HepG2 (cell line): ENCODE measurements at regions of chr1 and their contacts with region 1.

Region 1: DNA sequence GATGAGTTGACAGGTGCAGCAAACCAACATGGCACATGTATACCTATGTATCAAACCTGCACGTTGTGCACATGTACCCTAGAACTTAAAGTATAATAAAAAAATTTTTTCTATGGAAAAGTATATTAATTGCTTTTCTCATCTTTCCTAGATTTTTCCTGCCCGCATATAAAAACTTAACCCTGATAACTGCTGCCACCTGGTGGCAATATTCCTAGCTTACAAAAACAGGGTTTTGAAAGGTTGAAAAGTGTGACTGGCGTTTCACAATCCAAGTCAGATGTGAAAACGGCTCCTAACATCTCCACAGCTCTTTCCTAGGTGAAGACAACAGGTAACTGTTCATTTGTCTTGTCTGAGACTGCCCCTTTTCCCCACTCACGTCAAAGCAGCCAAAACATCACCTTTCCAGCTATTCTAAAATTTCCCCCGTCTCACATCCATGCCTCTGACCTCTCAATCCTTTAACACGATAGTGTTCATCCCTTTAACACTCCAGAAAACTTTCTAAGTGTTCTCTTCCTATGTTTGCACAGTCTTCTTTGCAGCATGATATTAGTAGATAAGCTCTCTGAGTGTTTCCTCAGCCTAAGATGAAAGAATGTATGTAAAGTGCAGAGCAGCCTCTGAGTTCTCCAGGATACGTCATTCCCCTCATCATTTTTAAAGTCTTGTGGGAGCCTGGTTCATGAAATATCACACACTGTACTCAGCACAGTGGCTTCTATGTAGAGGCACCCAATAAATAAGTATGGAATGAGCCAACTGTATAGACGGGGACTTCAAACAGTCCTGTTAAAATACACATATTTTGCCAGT is 27.5 kb downstream of the OVGP1 start:
- DNase-seq: peak; percentile 40
- ATAC-seq: no peak
- H3K4me3 ChIP-seq: no peak overlapping the region
- H3K27ac ChIP-seq: no peak overlapping the region
- H3K4me1 ChIP-seq: no peaks in the 10 kb centered on the region
- H3K27me3 ChIP-seq: peaks cover 0 to 13% of the 10 kb centered on the region in 2 experiments; a peak in 1 of 5 replicates
- CTCF ChIP-seq: peak; percentile 71
- EP300 ChIP-seq: no peak
- POLR2A ChIP-seq: no peak
- RAD21 ChIP-seq: peak; percentile 50; the same call in 1 of the 2 replicates

Region 2: GRCh38 chr1:111222308-111223125 is 177.5 kb before region 1 on chr1:
- CTCF ChIA-PET with region 1: interaction called, 17 read pairs
- POLR2A ChIA-PET with region 1: no interaction called
- in situ Hi-C with region 1: loop called (anchors 5 kb)
- intact Hi-C with region 1: loop called (anchors 2 kb)
- DNase-seq: peak; percentile 62
- ATAC-seq: peak; percentile 97
- H3K4me3 ChIP-seq: peak overlapping the region in 2 of 3 experiments; percentile 8 to 39; a peak in 3 of 6 replicates
- H3K27ac ChIP-seq: no peak overlapping the region
- H3K4me1 ChIP-seq: peaks cover 52% of the 10 kb centered on the region
- H3K27me3 ChIP-seq: no peaks in the 10 kb centered on the region; a peak in 1 of 5 replicates
- CTCF ChIP-seq: peak; percentile 97
- EP300 ChIP-seq: no peak
- POLR2A ChIP-seq: no peak
- RAD21 ChIP-seq: peak; percentile 97

Region 3: DNA sequence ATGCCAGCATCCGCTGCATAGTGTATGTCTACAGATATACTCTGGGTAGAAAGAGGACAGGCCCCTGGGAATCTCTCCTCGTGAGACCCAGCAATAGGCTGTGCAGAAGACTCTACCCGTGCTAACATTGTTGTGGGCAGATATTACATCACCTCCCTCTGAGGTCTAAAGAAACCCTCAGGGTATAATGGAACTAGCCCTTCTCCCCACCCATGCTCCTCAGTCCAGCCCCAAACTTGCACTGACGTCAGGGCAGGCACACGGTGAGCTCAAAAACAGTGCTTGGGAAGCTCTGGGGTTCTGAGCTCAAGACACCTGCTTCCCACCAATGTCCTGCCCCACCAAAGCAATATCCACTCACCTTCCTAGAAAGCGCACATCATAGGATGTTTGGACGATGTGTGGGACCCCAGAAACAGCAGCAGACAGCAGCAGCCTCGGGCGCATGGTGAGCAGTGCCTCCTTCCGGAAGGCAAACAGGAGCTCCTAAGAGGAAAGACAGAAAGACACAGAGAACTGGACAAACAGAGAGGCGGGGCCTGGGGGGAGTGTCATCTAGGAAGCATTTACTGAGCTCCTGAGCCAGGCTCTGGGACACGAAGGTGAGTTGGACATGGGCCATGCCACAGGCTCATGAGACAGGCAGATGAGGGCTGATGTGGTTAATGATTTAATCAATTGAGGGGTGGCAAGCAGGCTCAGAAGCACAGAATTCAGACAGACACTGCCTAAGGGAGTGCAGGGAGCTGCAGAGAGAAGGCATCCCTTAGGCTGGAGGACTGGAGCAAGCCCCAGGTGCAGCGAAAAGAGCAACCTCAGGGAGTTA is 22.8 kb after region 1 on chr1:
- CTCF ChIA-PET with region 1: no interaction called
- POLR2A ChIA-PET with region 1: interaction called, 10 read pairs
- in situ Hi-C with region 1: no loop called
- intact Hi-C with region 1: no loop called
- DNase-seq: peak; percentile 88
- ATAC-seq: peak; percentile 92
- H3K4me3 ChIP-seq: peak overlapping the region in 2 of 3 experiments; percentile 38 to 47; a peak in 2 of 6 replicates
- H3K27ac ChIP-seq: no peak overlapping the region
- H3K4me1 ChIP-seq: peaks cover 70% of the 10 kb centered on the region
- H3K27me3 ChIP-seq: no peaks in the 10 kb centered on the region
- CTCF ChIP-seq: peak; percentile 76
- EP300 ChIP-seq: no peak
- POLR2A ChIP-seq: no peak
- RAD21 ChIP-seq: no peak

Region 4: GRCh38 chr1:111592389-111593361 is 192.7 kb after region 1 on chr1:
- CTCF ChIA-PET with region 1: no interaction called
- POLR2A ChIA-PET with region 1: no interaction called
- in situ Hi-C with region 1: no loop called
- intact Hi-C with region 1: no loop called
- DNase-seq: peak; percentile 18
- ATAC-seq: peak; percentile 95
- H3K4me3 ChIP-seq: peak overlapping the region; percentile 30 to 53 (median 45)
- H3K27ac ChIP-seq: no peak overlapping the region
- H3K4me1 ChIP-seq: peaks cover 35% of the 10 kb centered on the region
- H3K27me3 ChIP-seq: peaks cover 0 to 2% of the 10 kb centered on the region in 2 experiments; a peak in 1 of 5 replicates
- CTCF ChIP-seq: no peak
- EP300 ChIP-seq: no peak
- POLR2A ChIP-seq: no peak
- RAD21 ChIP-seq: no peak